Esophagus muscularis mucosa (tissue), 4 donors: ENCODE measurements at regions of chr17 and their contacts with region 1.

Region 1: DNA sequence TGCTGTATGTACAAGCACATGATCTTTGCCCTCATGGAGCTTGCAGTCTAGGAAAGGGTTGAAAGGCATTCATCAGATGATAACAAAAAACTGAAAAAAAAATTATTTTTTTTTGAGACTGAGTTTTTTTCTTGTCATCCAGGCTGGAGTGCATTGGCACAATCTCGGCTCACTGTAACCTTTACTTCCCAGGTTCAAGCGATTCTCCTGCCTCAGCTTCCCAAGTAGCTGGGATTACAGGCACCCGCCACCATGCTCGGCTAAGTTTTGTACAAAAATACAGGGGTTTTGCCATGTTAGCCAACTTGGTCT is 38.7 kb upstream of the BCAS3 start:
- DNase-seq: no peak
- H3K4me3 ChIP-seq: no peak overlapping the region
- H3K27ac ChIP-seq: no peak overlapping the region
- H3K4me1 ChIP-seq: peaks cover 12 to 20% (median 16%) of the 10 kb centered on the region in 4 donors
- H3K27me3 ChIP-seq: no peaks in the 10 kb centered on the region
- CTCF ChIP-seq: no peak
- EP300 ChIP-seq: no peak
- POLR2A ChIP-seq: no peak

Region 2: DNA sequence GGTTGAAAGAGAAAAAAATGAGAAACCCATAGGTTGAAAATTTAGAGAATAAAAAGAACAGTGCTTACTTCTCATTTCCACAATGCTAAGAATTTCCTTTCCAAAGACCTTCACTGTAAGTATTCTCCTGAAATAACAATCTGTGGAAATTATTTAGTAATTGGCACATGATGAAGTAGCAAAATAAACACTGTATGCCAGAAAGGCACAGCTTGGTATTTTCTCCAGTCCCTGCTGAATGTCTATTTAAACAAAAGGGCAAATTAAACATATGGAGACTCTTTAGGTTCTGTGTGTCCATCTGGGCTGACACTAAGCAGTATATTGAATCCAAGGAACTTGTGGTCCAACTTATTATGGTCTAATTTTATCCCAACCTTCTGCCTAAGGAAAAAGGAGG is 170.6 kb before region 1 on chr17:
- intact Hi-C with region 1: loop called (anchors 5 kb)
- DNase-seq: no peak
- H3K4me3 ChIP-seq: no peak overlapping the region
- H3K27ac ChIP-seq: peak overlapping the region; percentile 35 to 54 (median 42)
- H3K4me1 ChIP-seq: peaks cover 28 to 44% (median 38%) of the 10 kb centered on the region in 4 donors
- H3K27me3 ChIP-seq: no peaks in the 10 kb centered on the region
- CTCF ChIP-seq: no peak
- EP300 ChIP-seq: no peak
- POLR2A ChIP-seq: no peak

Region 3: GRCh38 chr17:60577147-60577915 is 61.6 kb before region 1 on chr17:
- intact Hi-C with region 1: loop called (anchors 2 kb)
- DNase-seq: no peak
- H3K4me3 ChIP-seq: peak overlapping the region; percentile 42 to 54 (median 51)
- H3K27ac ChIP-seq: peak overlapping the region; percentile 75 to 79 (median 78)
- H3K4me1 ChIP-seq: peaks cover 19 to 37% (median 34%) of the 10 kb centered on the region in 4 donors
- H3K27me3 ChIP-seq: no peaks in the 10 kb centered on the region
- CTCF ChIP-seq: peak; percentile 46 to 63 (median 50)
- EP300 ChIP-seq: no peak
- POLR2A ChIP-seq: no peak

Region 4: GRCh38 chr17:60600490-60601446 is 38.2 kb before region 1 on chr17:
- intact Hi-C with region 1: loop called (anchors 2 kb)
- DNase-seq: peak; percentile 93
- H3K4me3 ChIP-seq: peak overlapping the region; percentile 73 to 99 (median 98)
- H3K27ac ChIP-seq: peak overlapping the region; percentile 97 to 99 (median 98)
- H3K4me1 ChIP-seq: peaks cover 28 to 50% (median 46%) of the 10 kb centered on the region in 4 donors
- H3K27me3 ChIP-seq: no peaks in the 10 kb centered on the region
- CTCF ChIP-seq: peak; percentile 70 to 83 (median 72)
- EP300 ChIP-seq: no peak
- POLR2A ChIP-seq: no peak

Region 5: DNA sequence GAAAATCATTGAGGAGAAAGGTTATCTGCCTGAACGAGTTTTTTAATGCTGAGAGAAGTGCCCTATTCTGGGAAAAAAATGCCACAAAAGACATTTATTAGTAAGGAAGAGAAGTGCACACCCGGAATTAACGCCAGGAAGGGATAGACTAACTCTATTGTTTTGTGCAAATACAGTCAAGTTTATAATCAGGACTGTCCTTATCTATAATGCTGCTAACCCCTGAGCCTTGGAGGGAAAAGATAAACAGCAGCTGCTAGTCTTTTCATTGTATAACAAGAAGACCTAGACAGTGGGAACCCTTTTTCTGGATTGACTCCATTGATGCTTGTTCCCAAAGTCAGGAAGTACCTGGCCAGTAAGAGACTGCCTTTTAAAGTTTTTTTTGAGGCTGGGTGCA is 65.2 kb after region 1 on chr17:
- intact Hi-C with region 1: no loop called
- DNase-seq: no peak
- H3K4me3 ChIP-seq: no peak overlapping the region
- H3K27ac ChIP-seq: no peak overlapping the region
- H3K4me1 ChIP-seq: no peaks in the 10 kb centered on the region
- H3K27me3 ChIP-seq: no peaks in the 10 kb centered on the region
- CTCF ChIP-seq: no peak
- EP300 ChIP-seq: no peak
- POLR2A ChIP-seq: no peak